ENCODE measurements at regions of chr16 and their contacts with region 1.

Region 1: GRCh38 chr16:50806099-50807062 is 64.5 kb downstream of the CYLD start:
- DNase-seq: peak; percentile 87
- H3K4me3 Mint-ChIP-seq: peak overlapping the region; percentile 63
- H3K27ac Mint-ChIP-seq: peak overlapping the region; percentile 57
- H3K4me1 Mint-ChIP-seq: peaks cover 12% of the 10 kb centered on the region
- H3K27me3 Mint-ChIP-seq: no peaks in the 10 kb centered on the region

Region 2: GRCh38 chr16:50065624-50066481 is 740.5 kb before region 1 on chr16 and contains the start of gene HEATR3:
- CTCF ChIA-PET with region 1: interaction called, 10 read pairs
- POLR2A ChIA-PET with region 1: no interaction called
- DNase-seq: peak; percentile 96
- H3K4me3 Mint-ChIP-seq: peak within 1 kb of the TSS; percentile 87
- H3K27ac Mint-ChIP-seq: peak within 1 kb of the TSS; percentile 92
- H3K4me1 Mint-ChIP-seq: peaks cover 42% of the 10 kb centered on the region
- H3K27me3 Mint-ChIP-seq: no peaks in the 10 kb centered on the region
- total RNA-seq, gene HEATR3: 20.7 to 21.3 TPM

Region 3: DNA sequence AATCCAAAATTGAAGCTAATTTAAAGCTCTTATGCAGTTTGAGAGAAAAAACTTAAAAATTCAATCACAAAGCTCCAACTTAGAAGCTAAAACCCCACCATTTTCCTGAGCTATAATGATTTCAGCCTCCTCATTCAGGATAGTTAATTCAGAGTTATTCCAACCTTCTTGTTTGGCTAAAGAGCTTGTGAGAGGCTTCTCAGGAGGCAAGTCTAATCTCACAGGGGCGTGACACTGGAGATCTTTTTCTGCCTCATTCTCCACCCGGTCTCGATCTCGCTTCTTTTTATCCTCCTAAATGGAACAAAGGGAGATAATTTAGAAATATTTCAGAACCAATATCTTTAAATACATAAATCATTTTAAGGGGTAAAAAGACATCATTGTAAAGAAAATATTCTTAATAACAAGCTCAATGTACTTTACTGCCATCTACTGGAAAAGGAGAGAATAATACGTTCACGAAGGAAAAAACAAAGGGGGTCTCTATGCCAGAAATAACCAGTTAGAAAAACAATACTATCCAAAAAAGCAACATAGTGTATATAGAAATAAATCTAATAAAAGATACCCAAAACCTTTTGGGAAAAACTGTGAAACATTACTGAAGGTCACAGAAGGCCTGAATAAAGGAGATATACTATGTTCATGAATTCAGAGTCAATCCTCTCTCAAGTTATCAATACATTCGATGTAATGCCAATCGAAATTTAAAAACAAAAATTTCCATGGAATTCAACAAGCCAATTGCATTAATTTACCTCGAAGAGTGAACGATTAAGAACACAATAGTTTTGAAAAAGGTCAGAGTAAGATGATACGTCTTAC is 451.5 kb before region 1 on chr16:
- CTCF ChIA-PET with region 1: interaction called, 28 read pairs
- POLR2A ChIA-PET with region 1: interaction called, 3 read pairs
- DNase-seq: no peak
- H3K4me3 Mint-ChIP-seq: no peak overlapping the region
- H3K27ac Mint-ChIP-seq: no peak overlapping the region
- H3K4me1 Mint-ChIP-seq: peaks cover 30% of the 10 kb centered on the region
- H3K27me3 Mint-ChIP-seq: no peaks in the 10 kb centered on the region

Region 4: GRCh38 chr16:50681021-50681885 is 125.1 kb before region 1 on chr16 and contains the start of gene SNX20:
- CTCF ChIA-PET with region 1: interaction called, 23 read pairs
- POLR2A ChIA-PET with region 1: no interaction called
- DNase-seq: peak; percentile 78
- H3K4me3 Mint-ChIP-seq: peak within 1 kb of the TSS; percentile 91
- H3K27ac Mint-ChIP-seq: peak within 1 kb of the TSS; percentile 86
- H3K4me1 Mint-ChIP-seq: peaks cover 91% of the 10 kb centered on the region
- H3K27me3 Mint-ChIP-seq: no peaks in the 10 kb centered on the region
- total RNA-seq, gene SNX20: 94.7 to 97.7 TPM

Region 5: DNA sequence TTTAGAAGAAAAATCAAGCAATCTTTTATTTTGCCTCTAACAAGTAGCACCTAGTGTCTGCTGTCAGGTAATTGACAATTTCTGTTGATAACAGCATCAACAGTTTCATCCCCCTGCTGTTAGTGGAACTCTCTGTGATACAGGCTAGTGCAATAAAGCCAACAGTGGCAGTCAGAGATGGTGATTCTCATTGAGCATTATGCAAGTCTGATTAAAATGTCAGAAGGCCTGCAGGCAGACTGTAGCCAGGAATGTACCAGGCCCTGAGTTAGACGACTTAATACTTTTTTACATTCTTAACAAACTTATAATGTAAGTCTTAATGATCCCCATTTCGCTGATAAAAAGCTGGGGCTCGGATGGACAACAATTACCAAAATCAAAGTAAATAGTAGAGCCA is 49.9 kb before region 1 on chr16:
- CTCF ChIA-PET with region 1: interaction called, 55 read pairs
- POLR2A ChIA-PET with region 1: no interaction called
- DNase-seq: no peak
- H3K4me3 Mint-ChIP-seq: no peak overlapping the region
- H3K27ac Mint-ChIP-seq: no peak overlapping the region
- H3K4me1 Mint-ChIP-seq: peaks cover 68% of the 10 kb centered on the region
- H3K27me3 Mint-ChIP-seq: no peaks in the 10 kb centered on the region

Region 6: GRCh38 chr16:50791522-50791921 is 14.9 kb before region 1 on chr16:
- CTCF ChIA-PET with region 1: interaction called, 46 read pairs
- POLR2A ChIA-PET with region 1: interaction called, 3 read pairs
- DNase-seq: no peak
- H3K4me3 Mint-ChIP-seq: no peak overlapping the region
- H3K27ac Mint-ChIP-seq: no peak overlapping the region
- H3K4me1 Mint-ChIP-seq: peaks cover 8% of the 10 kb centered on the region
- H3K27me3 Mint-ChIP-seq: no peaks in the 10 kb centered on the region

Region 7: DNA sequence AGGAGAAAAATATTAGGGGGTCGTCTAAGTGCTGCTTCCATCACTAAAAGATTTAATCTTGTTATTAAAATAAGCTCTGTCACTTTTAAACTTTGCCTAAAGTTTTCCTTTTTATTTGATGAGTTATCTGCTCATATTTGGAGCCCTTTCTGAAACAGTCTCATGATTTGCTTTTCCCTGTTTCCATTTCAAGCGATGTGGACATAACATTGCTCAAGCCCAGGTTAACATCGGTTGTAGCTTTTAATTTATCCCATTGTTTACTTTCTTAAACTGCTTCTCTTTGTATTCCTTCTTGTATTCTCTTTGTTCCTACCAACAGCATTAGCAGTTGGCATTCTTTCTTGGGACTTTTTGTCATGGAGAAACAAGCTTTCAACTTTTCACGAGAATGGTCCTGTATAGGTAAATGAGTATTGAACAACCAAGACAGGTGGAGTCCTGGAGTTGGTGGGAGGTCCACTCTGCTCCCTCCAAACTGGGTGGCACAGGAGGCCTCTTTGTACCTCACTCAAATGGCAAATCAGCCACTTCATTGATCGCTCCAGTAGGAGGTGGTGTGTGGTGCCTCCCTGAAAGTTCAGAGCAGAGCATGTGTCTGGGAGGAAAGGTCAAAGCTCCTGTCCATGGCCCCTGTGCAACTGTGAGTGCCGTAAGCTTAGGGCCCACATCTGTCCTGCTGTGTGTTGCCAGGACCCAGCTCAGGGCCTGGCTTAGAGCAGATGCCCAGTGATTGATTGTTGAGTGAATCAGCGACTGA is 42.6 kb after region 1 on chr16:
- CTCF ChIA-PET with region 1: no interaction called
- POLR2A ChIA-PET with region 1: no interaction called
- DNase-seq: no peak
- H3K4me3 Mint-ChIP-seq: no peak overlapping the region
- H3K27ac Mint-ChIP-seq: no peak overlapping the region
- H3K4me1 Mint-ChIP-seq: no peaks in the 10 kb centered on the region
- H3K27me3 Mint-ChIP-seq: peaks cover 29% of the 10 kb centered on the region

Region 8: DNA sequence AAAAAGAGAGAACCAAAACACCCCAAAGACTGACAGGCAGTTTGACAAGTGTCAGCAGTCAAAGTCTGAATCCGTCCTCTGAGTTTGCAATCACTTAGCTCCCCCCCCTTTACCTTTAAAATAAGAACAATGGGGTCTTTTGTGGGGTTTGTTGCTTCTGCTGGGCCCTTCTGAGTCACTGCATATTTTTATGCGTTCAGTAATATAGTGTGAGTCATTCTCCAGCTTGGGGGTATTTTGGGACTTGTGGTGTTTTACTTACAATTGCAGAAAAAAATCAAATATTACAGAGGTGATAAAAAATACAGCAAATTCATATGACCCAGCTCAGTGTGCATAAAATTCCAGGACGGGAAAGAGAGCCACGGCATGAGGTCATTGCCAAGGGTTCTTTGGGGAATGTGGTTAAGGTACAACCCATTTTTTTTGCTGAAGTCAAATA is 55.6 kb after region 1 on chr16:
- CTCF ChIA-PET with region 1: no interaction called
- POLR2A ChIA-PET with region 1: no interaction called
- DNase-seq: no peak
- H3K4me3 Mint-ChIP-seq: no peak overlapping the region
- H3K27ac Mint-ChIP-seq: no peak overlapping the region
- H3K4me1 Mint-ChIP-seq: no peaks in the 10 kb centered on the region
- H3K27me3 Mint-ChIP-seq: peaks cover 4% of the 10 kb centered on the region

Measured in activated CD4-positive, alpha-beta memory T cell treated with anti-CD3 and anti-CD28 coated beads, Interleukin-2, amount 10 ng/mL, durations not matched to agents 7 days and 5 days (primary cell).